ENCODE measurements at regions of chr10 and their contacts with region 1.

Region 1: DNA sequence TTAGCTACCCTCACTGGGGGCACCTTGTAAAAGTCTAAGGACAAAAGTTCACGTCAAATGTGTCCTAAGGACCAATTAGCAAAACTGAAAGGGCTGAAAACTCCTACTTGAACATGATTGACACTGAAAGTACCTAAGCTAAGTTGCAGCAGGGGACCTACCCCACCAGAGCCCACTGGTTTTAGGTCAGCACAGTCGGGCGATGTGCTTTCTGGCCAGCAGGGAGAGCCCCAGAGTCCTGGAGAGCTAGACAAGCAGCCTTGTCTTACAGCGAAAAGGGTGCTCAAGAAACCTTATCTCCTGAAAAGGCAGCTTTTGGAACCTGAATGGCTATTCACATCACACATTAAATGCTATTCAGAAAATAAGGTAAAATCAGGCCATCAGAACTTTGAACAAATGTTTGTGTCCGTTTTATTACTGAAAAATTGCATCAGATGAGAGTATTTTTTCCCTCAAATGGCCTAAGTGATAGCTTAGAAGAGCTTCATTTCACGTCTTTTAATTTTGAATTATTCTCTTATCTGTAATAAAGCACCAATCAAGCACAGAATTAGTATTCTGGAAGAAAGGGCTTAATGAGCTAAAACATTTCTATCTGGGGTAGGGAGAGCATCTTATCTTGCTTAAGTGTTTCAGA is 52.2 kb upstream of the MKI67 start:
- DNase-seq: peak in 4 of 5 donors; percentile 29 to 46 (median 40)
- H3K4me3 ChIP-seq: no peak overlapping the region
- H3K4me3 Mint-ChIP-seq: peak overlapping the region in 1 of 8 donors; percentile 26
- H3K27ac ChIP-seq: no peak overlapping the region
- H3K27ac Mint-ChIP-seq: peak overlapping the region in 1 of 7 donors; percentile 50
- H3K4me1 ChIP-seq: peaks cover 28% of the 10 kb centered on the region
- H3K4me1 Mint-ChIP-seq: peaks cover 21 to 41% (median 30%) of the 10 kb centered on the region in 4 donors
- H3K27me3 ChIP-seq: no peaks in the 10 kb centered on the region
- H3K27me3 Mint-ChIP-seq: peaks cover 0 to 1% of the 10 kb centered on the region in 2 donors

Region 2: DNA sequence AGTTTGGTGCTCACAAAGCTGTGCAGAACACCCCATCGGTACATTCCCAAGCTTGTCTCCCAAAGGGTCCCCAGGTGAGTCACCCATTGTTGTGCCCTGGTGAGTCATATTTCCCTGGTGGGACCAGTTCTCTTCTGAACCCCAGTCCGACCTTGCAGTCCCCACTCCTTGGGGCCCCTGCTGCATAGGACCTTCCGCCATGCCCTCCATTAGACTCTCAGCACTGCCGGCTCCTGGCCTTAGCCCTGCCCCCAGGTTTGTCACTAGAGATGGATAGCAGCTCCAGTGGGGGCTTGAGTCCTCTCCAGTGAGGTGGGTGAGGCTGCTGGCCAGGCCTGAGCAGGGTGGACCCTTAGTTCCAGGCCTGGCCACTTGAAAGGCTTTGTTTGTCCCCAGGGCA is 28.2 kb after region 1 on chr10:
- CTCF ChIA-PET with region 1: interaction called, 223 read pairs
- POLR2A ChIA-PET with region 1: interaction called, 32 read pairs
- intact Hi-C with region 1: no loop called
- DNase-seq: no peak
- H3K4me3 ChIP-seq: no peak overlapping the region
- H3K4me3 Mint-ChIP-seq: peak overlapping the region in 1 of 8 donors; percentile 31
- H3K27ac ChIP-seq: no peak overlapping the region
- H3K27ac Mint-ChIP-seq: no peak overlapping the region
- H3K4me1 ChIP-seq: peaks cover 14% of the 10 kb centered on the region
- H3K4me1 Mint-ChIP-seq: peaks cover 8 to 18% (median 10%) of the 10 kb centered on the region in 4 donors
- H3K27me3 ChIP-seq: no peaks in the 10 kb centered on the region
- H3K27me3 Mint-ChIP-seq: peaks cover 0 to 3% of the 10 kb centered on the region in 2 donors

Region 3: GRCh38 chr10:128530301-128530700 is 351.9 kb after region 1 on chr10:
- CTCF ChIA-PET with region 1: no interaction called
- POLR2A ChIA-PET with region 1: no interaction called
- intact Hi-C with region 1: loop called (anchors 5 kb)
- DNase-seq: no peak
- H3K4me3 ChIP-seq: no peak overlapping the region
- H3K4me3 Mint-ChIP-seq: no peak overlapping the region
- H3K27ac ChIP-seq: no peak overlapping the region
- H3K27ac Mint-ChIP-seq: no peak overlapping the region
- H3K4me1 ChIP-seq: no peaks in the 10 kb centered on the region
- H3K4me1 Mint-ChIP-seq: no peaks in the 10 kb centered on the region
- H3K27me3 ChIP-seq: no peaks in the 10 kb centered on the region
- H3K27me3 Mint-ChIP-seq: peaks cover 9 to 12% of the 10 kb centered on the region in 2 donors